Aorta (tissue), 5 donors: ENCODE measurements at regions of chr10 and their contacts with region 1.

Region 1: DNA sequence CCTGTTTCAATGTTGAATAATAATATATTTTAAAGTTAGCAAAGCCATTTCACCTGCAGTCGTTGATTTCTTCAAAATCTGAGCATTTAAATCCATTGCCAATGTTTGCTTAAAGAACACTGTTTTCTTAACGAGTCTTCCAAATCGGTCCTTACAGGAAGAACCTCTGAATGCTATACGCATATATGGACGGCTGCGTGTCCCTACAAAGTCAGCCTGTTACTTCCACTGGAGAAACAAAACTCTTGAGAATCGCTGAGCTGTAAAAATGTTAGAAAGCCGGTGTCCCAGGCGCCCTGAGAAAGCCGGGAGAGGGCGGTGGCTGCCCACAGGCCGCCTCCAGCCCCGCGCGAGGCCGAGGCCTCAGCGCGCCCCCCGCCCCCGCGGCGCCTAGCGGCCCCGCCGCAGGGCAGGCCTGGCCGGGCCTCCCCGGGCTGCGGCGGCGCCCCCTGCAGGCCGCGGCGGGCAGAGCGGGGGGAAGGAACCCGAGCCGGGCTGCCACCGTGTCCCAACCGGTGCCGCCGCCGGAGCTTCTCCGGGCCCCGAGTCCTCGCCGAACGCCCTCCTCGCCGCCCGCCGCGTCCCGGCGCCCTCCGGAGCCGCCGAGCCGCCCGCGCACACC is at the start of gene FHIP2A:
- DNase-seq: peak; percentile 82 to 94
- ATAC-seq: peak; percentile 94
- H3K4me3 ChIP-seq: peak within 1 kb of the TSS; percentile 55 to 86
- H3K27ac ChIP-seq: peak within 1 kb of the TSS; percentile 70 to 90
- H3K4me1 ChIP-seq: no peaks in the 10 kb centered on the region
- H3K27me3 ChIP-seq: no peaks in the 10 kb centered on the region
- total RNA-seq, gene FHIP2A: 33.1 to 48.4 TPM

Region 2: GRCh38 chr10:114937962-114938855 is 116.8 kb after region 1 on chr10 and contains the start of gene TRUB1:
- intact Hi-C with region 1: loop called in 1 of 2 experiments (anchors 5 kb)
- DNase-seq: peak; percentile 95 to 96
- ATAC-seq: peak; percentile 99
- H3K4me3 ChIP-seq: peak within 1 kb of the TSS; percentile 78 to 96
- H3K27ac ChIP-seq: peak within 1 kb of the TSS in 1 of 2 donors; percentile 7
- H3K4me1 ChIP-seq: peaks cover 0 to 2% of the 10 kb centered on the region in 2 donors
- H3K27me3 ChIP-seq: no peaks in the 10 kb centered on the region
- total RNA-seq, gene TRUB1: 5.4 to 10.0 TPM

Region 3: GRCh38 chr10:115063701-115064658 is 242.6 kb after region 1 on chr10:
- intact Hi-C with region 1: no loop called
- DNase-seq: no peak
- ATAC-seq: no peak
- H3K4me3 ChIP-seq: no peak overlapping the region
- H3K27ac ChIP-seq: no peak overlapping the region
- H3K4me1 ChIP-seq: no peaks in the 10 kb centered on the region
- H3K27me3 ChIP-seq: no peaks in the 10 kb centered on the region